ENCODE measurements at regions of chrX and their contacts with region 1.

Region 1: GRCh38 chrX:136953867-136954787 is 73.6 kb upstream of the RBMX start:
- DNase-seq: peak; percentile 74
- H3K4me3 Mint-ChIP-seq: no peak overlapping the region
- H3K27ac Mint-ChIP-seq: no peak overlapping the region
- H3K4me1 Mint-ChIP-seq: peaks cover 2% of the 10 kb centered on the region
- H3K27me3 Mint-ChIP-seq: no peaks in the 10 kb centered on the region

Region 2: GRCh38 chrX:136967966-136968365 is 13.8 kb after region 1 on chrX:
- CTCF ChIA-PET with region 1: no interaction called
- POLR2A ChIA-PET with region 1: no interaction called
- intact Hi-C with region 1: loop called (anchors 2 kb)
- DNase-seq: no peak
- H3K4me3 Mint-ChIP-seq: no peak overlapping the region
- H3K27ac Mint-ChIP-seq: no peak overlapping the region
- H3K4me1 Mint-ChIP-seq: peaks cover 16% of the 10 kb centered on the region
- H3K27me3 Mint-ChIP-seq: no peaks in the 10 kb centered on the region

Region 3: DNA sequence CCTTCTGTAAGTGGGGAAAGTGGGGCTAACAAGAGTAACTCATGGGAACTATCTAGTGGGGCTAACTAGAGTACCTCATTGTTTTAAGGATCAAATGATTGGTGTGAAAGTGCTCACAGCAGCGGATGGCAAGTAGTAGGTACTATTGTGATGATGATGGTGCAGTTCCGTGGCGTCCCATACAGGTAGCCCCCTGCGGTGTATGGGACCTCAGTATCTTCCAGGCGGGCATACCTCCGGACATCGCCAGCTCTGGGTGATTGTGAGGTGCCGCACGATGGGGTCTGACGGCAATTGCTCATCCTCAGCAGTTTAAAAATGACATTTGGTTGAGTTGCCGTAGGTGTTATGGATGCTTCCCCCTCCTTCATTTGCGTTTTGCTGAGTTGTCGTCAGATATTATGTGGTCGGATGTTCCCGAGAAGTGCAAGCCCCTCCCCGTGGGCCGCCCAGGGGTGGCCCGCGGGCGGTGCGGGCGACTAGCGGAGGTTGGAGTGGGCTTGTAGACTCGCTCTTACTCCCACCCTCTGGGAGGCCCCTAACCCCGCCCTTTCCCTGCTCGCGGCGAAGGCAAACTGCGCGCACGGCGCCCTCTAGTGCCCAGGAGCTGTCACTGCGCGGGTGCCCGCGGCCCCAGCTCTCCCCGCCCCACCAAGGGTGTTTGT is 98.0 kb after region 1 on chrX:
- CTCF ChIA-PET with region 1: interaction called, 30 read pairs
- POLR2A ChIA-PET with region 1: no interaction called
- intact Hi-C with region 1: loop called (anchors 1 kb)
- DNase-seq: peak; percentile 86
- H3K4me3 Mint-ChIP-seq: peak overlapping the region; percentile 83
- H3K27ac Mint-ChIP-seq: no peak overlapping the region
- H3K4me1 Mint-ChIP-seq: peaks cover 8% of the 10 kb centered on the region
- H3K27me3 Mint-ChIP-seq: peaks cover 12% of the 10 kb centered on the region

Region 4: DNA sequence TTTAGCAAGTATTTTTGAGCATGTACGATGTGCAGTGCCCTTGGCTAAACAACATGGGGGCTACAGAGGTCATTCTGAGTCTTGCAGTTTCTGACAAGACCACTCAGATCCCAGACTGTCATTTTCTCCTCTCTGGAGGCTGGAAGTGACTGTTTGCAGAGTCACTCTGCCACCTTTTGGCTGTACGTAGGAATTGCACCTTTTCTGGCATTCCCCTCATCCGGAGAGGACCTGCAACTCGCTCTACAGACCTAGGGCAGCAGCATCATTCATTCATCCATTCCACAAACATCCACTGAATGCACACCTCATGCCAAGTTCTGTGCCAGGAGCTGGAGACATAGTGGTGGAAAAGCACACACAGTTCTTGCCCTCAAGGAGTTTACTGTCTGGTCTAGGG is 240.0 kb after region 1 on chrX:
- CTCF ChIA-PET with region 1: interaction called, 17 read pairs
- POLR2A ChIA-PET with region 1: no interaction called
- intact Hi-C with region 1: loop called (anchors 1 kb)
- DNase-seq: peak; percentile 18
- H3K4me3 Mint-ChIP-seq: no peak overlapping the region
- H3K27ac Mint-ChIP-seq: no peak overlapping the region
- H3K4me1 Mint-ChIP-seq: no peaks in the 10 kb centered on the region
- H3K27me3 Mint-ChIP-seq: peaks cover 1% of the 10 kb centered on the region